Heart right ventricle (tissue), 16 donors: ENCODE measurements at regions of chr9 and their contacts with region 1.

Region 1: GRCh38 chr9:5696884-5697283 is 68.0 kb downstream of the RIC1 start:
- DNase-seq: no peak
- ATAC-seq: no peak
- H3K4me3 ChIP-seq: no peak overlapping the region
- H3K27ac ChIP-seq: no peak overlapping the region
- H3K4me1 ChIP-seq: peaks cover 0 to 15% (median 0%) of the 10 kb centered on the region in 9 donors
- H3K27me3 ChIP-seq: no peaks in the 10 kb centered on the region
- CTCF ChIP-seq: no peak

Region 2: DNA sequence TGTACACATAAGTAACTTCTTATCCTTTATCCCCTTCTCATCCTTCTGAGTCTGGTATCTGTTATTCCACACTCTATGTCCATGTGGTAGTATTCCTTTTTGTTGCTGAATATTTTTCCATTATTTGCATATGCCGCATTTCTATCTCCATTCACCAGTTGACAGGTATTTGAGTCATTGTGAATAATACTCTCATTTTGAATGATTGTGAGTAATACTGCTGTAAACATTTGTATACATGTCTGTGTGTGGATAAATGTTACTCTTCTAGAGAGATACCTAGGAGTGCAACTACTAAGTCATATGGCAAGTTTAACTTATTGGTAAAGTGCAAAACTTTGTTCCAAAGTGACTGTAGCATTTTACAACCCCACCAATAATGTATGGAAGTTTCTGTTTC is 52.4 kb before region 1 on chr9:
- intact Hi-C with region 1: loop called in 1 of 10 experiments (anchors 10 kb)
- DNase-seq: no peak
- ATAC-seq: no peak
- H3K4me3 ChIP-seq: no peak overlapping the region
- H3K27ac ChIP-seq: no peak overlapping the region
- H3K4me1 ChIP-seq: peaks cover 0 to 23% (median 13%) of the 10 kb centered on the region in 9 donors
- H3K27me3 ChIP-seq: no peaks in the 10 kb centered on the region
- CTCF ChIP-seq: no peak

Region 3: GRCh38 chr9:5764130-5764868 is 67.4 kb after region 1 on chr9:
- intact Hi-C with region 1: no loop called
- DNase-seq: no peak
- ATAC-seq: no peak
- H3K4me3 ChIP-seq: no peak overlapping the region
- H3K27ac ChIP-seq: no peak overlapping the region
- H3K4me1 ChIP-seq: no peaks in the 10 kb centered on the region
- H3K27me3 ChIP-seq: no peaks in the 10 kb centered on the region
- CTCF ChIP-seq: no peak